ENCODE measurements at regions of chr5 and their contacts with region 1.

Region 1: DNA sequence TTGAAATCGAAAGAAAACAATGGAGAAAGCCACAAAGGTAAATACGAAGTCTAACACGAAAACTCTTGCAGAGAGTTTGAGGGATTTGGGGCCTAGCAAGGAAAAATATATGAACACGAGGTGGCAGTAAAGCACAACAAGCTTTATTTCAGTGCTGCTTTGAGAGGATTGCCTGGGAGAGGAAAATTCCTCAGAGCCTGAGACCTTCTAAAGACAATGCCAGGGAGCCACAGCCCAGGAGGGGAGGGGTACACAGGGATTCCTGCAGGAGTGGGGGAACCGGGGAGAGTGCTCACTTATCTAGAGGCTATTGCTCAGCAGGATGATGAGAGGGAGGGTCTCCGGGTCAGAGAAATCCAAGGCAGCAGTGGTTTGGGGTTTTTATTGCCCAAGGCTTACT is 134.9 kb upstream of the ADCY2 start:
- DNase-seq: no peak
- ATAC-seq: no peak
- H3K4me3 Mint-ChIP-seq: no peak overlapping the region
- H3K27ac Mint-ChIP-seq: no peak overlapping the region
- H3K4me1 Mint-ChIP-seq: no peaks in the 10 kb centered on the region
- H3K27me3 Mint-ChIP-seq: peaks cover 3% of the 10 kb centered on the region

Region 2: GRCh38 chr5:7745882-7746610 is 485.0 kb after region 1 on chr5:
- CTCF ChIA-PET with region 1: interaction called, 3 read pairs
- POLR2A ChIA-PET with region 1: no interaction called
- intact Hi-C with region 1: loop called in 1 of 2 experiments (anchors 2 kb)
- DNase-seq: peak; percentile 69
- ATAC-seq: no peak
- H3K4me3 Mint-ChIP-seq: no peak overlapping the region
- H3K27ac Mint-ChIP-seq: no peak overlapping the region
- H3K4me1 Mint-ChIP-seq: no peaks in the 10 kb centered on the region
- H3K27me3 Mint-ChIP-seq: peaks cover 8% of the 10 kb centered on the region

Region 3: DNA sequence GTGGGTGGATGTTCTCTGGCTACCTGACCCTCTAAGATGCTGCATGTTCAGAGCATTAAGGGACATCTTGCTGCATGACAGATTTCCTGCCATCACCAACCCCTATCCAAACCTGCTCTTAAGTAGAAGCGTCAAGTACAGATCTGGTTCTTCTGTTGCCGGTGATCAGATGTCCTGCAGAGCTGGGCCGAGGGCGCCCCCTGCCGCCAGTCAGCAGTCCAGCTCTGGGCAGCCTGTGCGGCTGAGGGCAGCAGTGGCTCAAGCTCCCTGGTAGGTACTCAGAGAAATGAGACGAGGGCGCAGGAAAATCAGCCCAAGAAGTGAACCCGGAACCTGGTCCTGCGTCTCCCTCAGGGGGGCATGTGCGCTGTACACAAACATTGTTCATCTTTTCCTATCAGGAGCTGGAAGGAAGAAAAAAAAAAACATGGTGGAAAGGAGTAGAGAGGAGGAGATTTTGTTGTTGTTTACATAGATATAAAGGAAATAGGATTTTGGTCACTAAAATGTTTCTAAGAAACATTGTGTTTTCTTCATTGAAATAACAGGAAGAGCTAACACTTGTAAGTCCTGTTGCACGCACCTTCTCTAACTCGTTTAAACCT is 494.0 kb after region 1 on chr5:
- CTCF ChIA-PET with region 1: no interaction called
- POLR2A ChIA-PET with region 1: no interaction called
- intact Hi-C with region 1: loop called in 1 of 2 experiments (anchors 2 kb)
- DNase-seq: peak; percentile 74
- ATAC-seq: peak; percentile 61
- H3K4me3 Mint-ChIP-seq: no peak overlapping the region
- H3K27ac Mint-ChIP-seq: no peak overlapping the region
- H3K4me1 Mint-ChIP-seq: no peaks in the 10 kb centered on the region
- H3K27me3 Mint-ChIP-seq: peaks cover 29% of the 10 kb centered on the region

Region 4: DNA sequence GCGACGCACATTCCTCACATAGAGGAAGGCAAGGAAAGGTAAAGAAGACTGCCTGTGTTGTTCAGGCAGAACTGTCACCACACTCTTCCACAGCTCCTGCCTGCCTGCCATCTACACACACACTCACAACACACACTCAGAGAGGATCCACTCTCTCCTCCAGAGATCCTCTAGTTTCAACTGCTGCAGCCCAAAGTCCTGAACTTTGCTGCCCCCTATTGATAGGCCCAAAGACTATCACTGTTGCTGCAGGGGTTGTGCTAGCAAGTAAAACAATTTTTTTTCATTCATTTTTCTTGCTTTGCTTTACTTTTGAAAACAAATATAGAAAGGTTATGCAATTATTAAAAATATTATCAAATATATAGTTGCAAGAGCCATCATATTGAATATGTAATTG is 595.8 kb after region 1 on chr5:
- CTCF ChIA-PET with region 1: interaction called, 4 read pairs
- POLR2A ChIA-PET with region 1: no interaction called
- intact Hi-C with region 1: loop called in 1 of 2 experiments (anchors 1 kb)
- DNase-seq: peak; percentile 57
- ATAC-seq: peak; percentile 71
- H3K4me3 Mint-ChIP-seq: no peak overlapping the region
- H3K27ac Mint-ChIP-seq: no peak overlapping the region
- H3K4me1 Mint-ChIP-seq: peaks cover 26% of the 10 kb centered on the region
- H3K27me3 Mint-ChIP-seq: no peaks in the 10 kb centered on the region

Measured in activated CD4-positive, alpha-beta T cell treated with anti-CD3 and anti-CD28 coated beads for 36 hours (primary cell).